ENCODE measurements at regions of chr11 and their contacts with region 1.

Region 1: DNA sequence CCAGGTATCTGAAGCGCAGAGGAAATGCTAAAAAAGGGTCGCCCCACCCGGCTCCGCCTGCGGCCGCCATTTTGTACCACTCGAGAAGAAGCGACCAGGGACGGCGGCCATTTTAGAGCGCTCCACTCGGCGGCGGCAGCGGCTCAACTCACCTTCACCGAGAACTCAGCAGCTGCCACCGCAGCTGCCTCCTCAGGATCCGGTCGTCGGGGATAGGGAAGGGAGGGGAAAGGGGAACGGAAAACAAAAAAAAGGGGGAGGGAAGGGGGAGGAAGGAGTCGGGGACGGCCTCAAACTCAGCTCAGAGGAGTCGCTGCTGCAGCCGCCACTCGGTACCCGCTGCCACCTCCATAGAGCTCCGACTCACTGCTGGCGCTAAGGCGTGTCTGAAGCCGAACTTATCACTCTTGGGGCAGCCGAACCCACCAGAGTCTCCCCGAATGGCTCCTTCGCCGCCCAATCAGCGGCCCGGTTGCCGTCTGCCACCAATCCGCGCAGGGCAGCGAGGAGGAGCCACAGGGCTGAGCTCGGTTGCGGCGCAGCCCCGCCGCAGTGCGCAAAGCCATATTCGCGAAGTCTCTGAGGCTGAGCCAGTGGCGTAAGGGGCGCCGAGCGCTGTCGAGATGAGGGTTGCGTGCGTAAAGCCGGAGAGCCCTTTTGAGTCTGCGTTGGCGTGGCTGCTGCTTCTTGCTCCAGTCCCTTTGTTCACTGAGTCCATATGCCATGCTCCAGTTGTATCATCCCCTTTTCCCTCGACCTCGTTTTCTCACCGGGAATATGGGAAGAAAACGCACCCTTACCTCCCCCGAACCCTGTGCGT is at the start of gene EIF4G2:
- DNase-seq: peak; percentile 98
- ATAC-seq: peak; percentile 96
- H3K4me3 Mint-ChIP-seq: peak within 1 kb of the TSS; percentile 93
- H3K27ac Mint-ChIP-seq: peak within 1 kb of the TSS; percentile 96
- H3K4me1 Mint-ChIP-seq: peaks cover 42% of the 10 kb centered on the region
- H3K27me3 Mint-ChIP-seq: peaks cover 2% of the 10 kb centered on the region
- total RNA-seq, gene EIF4G2: 953 to 1,693 TPM

Region 2: GRCh38 chr11:10450464-10451425 is 358.0 kb before region 1 on chr11:
- CTCF ChIA-PET with region 1: no interaction called
- POLR2A ChIA-PET with region 1: interaction called, 5 read pairs
- intact Hi-C with region 1: loop called in 1 of 2 experiments (anchors 1 kb)
- DNase-seq: peak; percentile 72
- ATAC-seq: peak; percentile 48
- H3K4me3 Mint-ChIP-seq: peak overlapping the region; percentile 80
- H3K27ac Mint-ChIP-seq: peak overlapping the region; percentile 88
- H3K4me1 Mint-ChIP-seq: peaks cover 55% of the 10 kb centered on the region
- H3K27me3 Mint-ChIP-seq: peaks cover 2% of the 10 kb centered on the region

Region 3: DNA sequence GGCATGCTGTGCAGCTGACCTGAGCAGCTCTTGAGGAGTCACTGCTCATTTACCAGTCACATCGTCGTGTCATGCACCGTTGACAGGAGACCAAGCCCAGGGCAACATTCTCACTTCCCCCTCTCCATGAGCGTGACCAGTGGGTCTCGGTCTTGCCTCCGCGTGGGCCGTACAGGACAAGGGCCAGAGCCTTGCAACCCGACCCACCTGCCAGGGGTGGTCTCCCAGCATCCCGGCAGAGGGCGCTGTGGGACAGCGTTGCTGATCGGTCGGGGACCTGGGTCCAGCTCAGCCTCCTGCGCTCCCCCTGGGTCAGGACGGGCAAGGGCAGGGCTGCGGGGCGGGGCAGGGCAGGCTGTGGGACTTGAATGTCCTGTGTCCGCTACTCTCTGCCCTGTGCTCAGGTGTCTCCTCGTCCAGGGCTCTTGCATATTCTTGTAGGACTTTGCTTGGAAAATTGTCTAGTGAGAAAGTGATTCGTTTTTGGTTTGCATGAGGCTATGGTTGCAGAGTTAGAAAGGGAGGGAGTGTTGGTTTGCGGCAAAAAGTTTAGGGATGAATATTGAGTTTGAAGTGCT is 16.3 kb before region 1 on chr11:
- CTCF ChIA-PET with region 1: interaction called, 60 read pairs
- POLR2A ChIA-PET with region 1: interaction called, 32 read pairs
- intact Hi-C with region 1: no loop called
- DNase-seq: peak; percentile 93
- ATAC-seq: peak; percentile 96
- H3K4me3 Mint-ChIP-seq: no peak overlapping the region
- H3K27ac Mint-ChIP-seq: no peak overlapping the region
- H3K4me1 Mint-ChIP-seq: peaks cover 21% of the 10 kb centered on the region
- H3K27me3 Mint-ChIP-seq: peaks cover 3% of the 10 kb centered on the region

Region 4: GRCh38 chr11:10857709-10858438 is 49.1 kb after region 1 on chr11 and contains the start of gene ZBED5:
- CTCF ChIA-PET with region 1: interaction called, 23 read pairs
- POLR2A ChIA-PET with region 1: interaction called, 61 read pairs
- intact Hi-C with region 1: loop called (anchors 1 kb)
- DNase-seq: peak; percentile 98
- ATAC-seq: peak; percentile 93
- H3K4me3 Mint-ChIP-seq: peak within 1 kb of the TSS; percentile 100
- H3K27ac Mint-ChIP-seq: peak within 1 kb of the TSS; percentile 100
- H3K4me1 Mint-ChIP-seq: peaks cover 40% of the 10 kb centered on the region
- H3K27me3 Mint-ChIP-seq: no peaks in the 10 kb centered on the region
- total RNA-seq, gene ZBED5: 34.1 to 44.3 TPM

Region 5: DNA sequence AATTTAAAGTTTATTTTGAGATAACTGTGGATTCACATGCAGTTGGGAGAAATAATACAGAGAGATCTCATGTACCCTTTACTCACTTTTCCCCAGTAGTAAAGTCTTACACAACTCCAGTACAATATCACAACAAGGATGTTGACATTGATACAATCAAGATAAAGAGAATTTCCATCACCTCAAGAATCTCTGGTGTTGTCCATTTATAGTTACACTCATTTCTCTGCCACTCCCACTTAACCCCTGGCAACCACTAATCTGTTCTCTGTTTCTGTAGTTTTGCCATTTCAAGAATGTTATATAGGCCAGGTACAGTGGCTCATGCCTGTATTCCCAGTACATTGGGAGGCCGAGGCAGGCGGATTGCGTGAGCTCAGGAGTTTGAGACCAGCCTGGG is 59.6 kb after region 1 on chr11:
- CTCF ChIA-PET with region 1: no interaction called
- POLR2A ChIA-PET with region 1: no interaction called
- intact Hi-C with region 1: no loop called
- DNase-seq: no peak
- ATAC-seq: peak; percentile 36
- H3K4me3 Mint-ChIP-seq: no peak overlapping the region
- H3K27ac Mint-ChIP-seq: no peak overlapping the region
- H3K4me1 Mint-ChIP-seq: peaks cover 14% of the 10 kb centered on the region
- H3K27me3 Mint-ChIP-seq: no peaks in the 10 kb centered on the region

Region 6: GRCh38 chr11:10899121-10899830 is 90.5 kb after region 1 on chr11:
- CTCF ChIA-PET with region 1: interaction called, 3 read pairs
- POLR2A ChIA-PET with region 1: interaction called, 21 read pairs
- intact Hi-C with region 1: no loop called
- DNase-seq: no peak
- ATAC-seq: peak; percentile 51
- H3K4me3 Mint-ChIP-seq: no peak overlapping the region
- H3K27ac Mint-ChIP-seq: peak overlapping the region; percentile 91
- H3K4me1 Mint-ChIP-seq: peaks cover 29% of the 10 kb centered on the region
- H3K27me3 Mint-ChIP-seq: peaks cover 5% of the 10 kb centered on the region

Region 7: DNA sequence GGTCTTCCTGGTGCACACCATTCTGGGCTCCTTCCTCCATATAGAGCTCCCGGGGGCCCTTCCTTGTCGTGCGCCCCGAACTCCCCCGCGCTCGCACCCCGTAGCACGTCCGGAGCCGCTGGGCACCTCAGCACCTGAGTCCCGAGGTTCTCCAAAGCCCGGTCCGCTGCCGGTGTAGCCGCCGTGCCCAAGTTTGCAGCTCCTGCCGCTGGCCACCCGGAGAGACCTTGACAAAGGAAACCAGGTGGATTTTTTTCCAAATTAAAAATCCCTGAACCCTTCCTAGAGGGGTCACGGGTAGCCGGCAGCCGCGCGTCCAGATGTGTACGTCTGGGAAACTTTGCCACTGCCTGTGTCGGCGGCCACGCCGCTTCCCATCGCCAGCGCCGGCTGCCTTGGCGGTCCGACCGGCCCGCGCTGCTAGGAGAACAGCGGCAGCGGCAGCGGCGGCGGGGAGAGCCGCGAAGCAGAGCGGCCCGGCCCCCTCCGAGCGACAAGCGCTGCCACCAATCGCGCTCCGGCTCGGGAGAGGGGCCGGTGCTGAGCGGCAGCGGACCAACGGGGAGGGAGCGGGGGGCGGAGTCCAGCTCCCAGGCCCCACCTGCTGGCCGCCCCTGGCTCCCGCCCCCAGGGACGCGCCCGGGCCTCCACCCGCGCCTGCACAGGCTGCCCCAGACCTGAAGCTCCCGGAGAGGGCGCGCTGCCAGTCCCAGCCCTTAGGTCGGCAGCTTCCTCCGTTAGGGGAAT is 813.0 kb after region 1 on chr11 and contains the start of gene GALNT18:
- CTCF ChIA-PET with region 1: no interaction called
- POLR2A ChIA-PET with region 1: no interaction called
- intact Hi-C with region 1: loop called in 1 of 2 experiments (anchors 2 kb)
- DNase-seq: peak; percentile 94
- ATAC-seq: peak; percentile 99
- H3K4me3 Mint-ChIP-seq: peak within 1 kb of the TSS; percentile 80
- H3K27ac Mint-ChIP-seq: peak within 1 kb of the TSS; percentile 63
- H3K4me1 Mint-ChIP-seq: peaks cover 5% of the 10 kb centered on the region
- H3K27me3 Mint-ChIP-seq: peaks cover 37% of the 10 kb centered on the region
- total RNA-seq, gene GALNT18: 6.9 to 8.8 TPM